AG04449 (cell line): ENCODE measurements at regions of chr10 and their contacts with region 1.

Region 1: DNA sequence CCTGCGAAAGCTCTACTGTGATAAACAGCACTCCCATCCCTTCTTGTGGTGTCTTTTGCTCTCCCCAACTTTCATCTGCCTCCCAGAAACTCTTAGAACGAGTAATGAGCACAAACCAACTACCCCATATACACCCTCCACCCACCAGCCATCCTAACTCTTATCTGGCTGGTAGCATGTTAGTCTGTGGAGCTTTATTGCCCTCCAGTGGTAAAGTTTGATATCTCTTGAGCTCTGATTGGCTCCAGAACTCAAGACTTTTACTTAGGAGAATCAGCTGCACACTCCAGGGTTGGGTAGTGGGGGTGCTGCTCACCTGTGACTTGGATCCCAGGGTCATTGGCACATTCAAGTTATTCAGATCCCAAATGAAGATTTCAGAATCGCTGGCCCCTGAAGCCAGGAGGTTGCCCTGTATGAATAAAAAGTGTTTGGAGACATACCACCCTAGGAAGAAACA is 10.9 kb downstream of the SEC31B start:
- DNase-seq: no peak
- H3K4me3 ChIP-seq: no peak overlapping the region
- CTCF ChIP-seq: peak; percentile 63

Region 2: GRCh38 chr10:100303724-100304319 is 204.9 kb before region 1 on chr10:
- CTCF ChIA-PET with region 1: interaction called, 12 read pairs
- POLR2A ChIA-PET with region 1: no interaction called
- DNase-seq: no peak
- H3K4me3 ChIP-seq: no peak overlapping the region
- CTCF ChIP-seq: peak; percentile 42

Region 3: GRCh38 chr10:100446130-100446761 is 62.5 kb before region 1 on chr10:
- CTCF ChIA-PET with region 1: interaction called, 124 read pairs
- POLR2A ChIA-PET with region 1: no interaction called
- DNase-seq: no peak
- H3K4me3 ChIP-seq: no peak overlapping the region
- CTCF ChIP-seq: no peak

Region 4: DNA sequence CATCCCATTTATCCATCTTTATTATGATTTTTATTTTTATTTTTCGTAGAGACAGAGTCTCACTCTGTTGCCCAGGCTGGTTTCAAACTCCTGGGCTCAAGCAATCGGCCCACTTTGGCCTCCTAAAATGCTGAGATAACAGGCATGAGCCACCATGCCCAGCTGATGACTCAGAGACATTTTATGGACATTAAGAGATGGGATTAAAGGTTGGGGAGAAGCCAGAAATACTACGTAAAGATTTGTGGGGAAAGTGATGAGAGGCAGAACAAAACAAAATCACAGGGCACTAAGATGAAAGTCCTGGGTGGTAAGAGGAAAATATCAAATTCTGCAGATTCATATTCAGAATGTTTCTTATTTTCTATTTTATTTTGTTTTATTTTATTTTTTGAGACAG is 38.4 kb before region 1 on chr10:
- CTCF ChIA-PET with region 1: interaction called, 11 read pairs
- POLR2A ChIA-PET with region 1: no interaction called
- DNase-seq: no peak
- H3K4me3 ChIP-seq: no peak overlapping the region
- CTCF ChIP-seq: no peak

Region 5: DNA sequence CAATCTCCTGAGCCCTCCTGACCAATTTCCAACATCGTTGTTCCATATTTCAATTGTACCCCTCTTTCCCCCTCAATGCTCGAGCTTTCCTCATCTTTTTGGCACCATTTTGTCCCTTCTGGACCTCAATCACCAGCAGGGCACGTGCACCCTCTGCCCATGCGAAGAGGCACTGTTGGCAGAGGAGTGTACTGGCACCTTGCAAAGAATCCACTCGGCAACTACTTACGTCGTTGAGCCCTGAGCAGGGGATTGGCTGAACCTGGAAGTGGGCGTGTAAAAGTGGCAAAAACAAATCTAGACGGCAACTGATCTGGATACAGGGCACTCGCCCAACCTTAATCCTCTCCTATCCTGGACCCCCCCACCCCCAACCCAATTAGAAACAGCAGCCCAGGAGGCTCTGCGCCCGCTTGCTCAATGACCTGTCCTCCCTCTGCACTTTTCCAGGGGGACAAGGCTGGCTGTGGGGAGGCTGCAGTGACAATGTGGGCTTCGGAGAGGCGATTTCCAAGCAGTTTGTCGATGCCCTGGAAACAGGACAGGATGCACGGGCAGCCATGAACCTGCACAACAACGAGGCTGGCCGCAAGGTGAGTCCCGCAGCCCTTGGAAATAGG is 27.1 kb before region 1 on chr10:
- CTCF ChIA-PET with region 1: interaction called, 422 read pairs
- POLR2A ChIA-PET with region 1: interaction called, 4 read pairs
- DNase-seq: no peak
- H3K4me3 ChIP-seq: peak overlapping the region; percentile 53
- CTCF ChIP-seq: no peak

Region 6: DNA sequence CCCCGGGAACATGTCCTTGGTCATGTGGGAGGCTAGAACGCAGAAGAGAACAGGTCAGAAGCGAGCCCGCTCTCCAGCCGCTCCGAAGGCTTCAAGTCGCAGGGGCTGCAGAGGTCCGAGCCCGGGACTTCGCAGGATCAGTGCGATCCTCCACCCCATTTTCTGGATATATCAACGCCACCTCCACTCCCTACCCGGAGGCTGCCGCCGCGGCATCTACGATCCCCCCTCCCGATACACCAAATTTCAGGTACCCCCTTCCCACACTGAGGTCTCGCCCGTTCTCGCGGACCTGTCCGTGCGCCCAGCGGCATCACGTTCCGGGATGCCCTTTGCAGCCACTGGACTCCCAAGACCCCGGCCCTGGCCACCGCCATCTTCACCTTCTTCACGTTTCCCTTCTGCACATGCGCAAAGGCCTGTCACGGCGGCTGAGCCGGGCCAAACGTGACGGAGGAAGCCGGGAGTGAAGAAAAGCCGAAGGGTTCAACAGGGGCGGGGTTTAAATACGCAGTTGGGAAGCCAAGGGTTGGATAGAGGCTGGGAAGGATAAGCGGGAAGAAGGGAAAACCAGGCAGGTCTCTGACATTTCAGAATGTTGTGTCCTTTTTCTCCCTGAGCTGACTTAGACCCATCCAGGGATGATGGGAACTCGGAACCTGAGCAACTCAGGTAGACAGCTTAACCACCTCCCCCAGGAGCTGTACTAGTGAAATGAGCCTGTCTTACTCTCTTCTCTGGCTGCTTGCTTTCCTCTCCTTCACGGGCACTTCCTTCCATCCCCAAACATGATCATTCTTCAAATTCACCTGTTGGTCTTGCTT is 21.0 kb after region 1 on chr10 and contains the start of gene NDUFB8:
- CTCF ChIA-PET with region 1: interaction called, 67 read pairs
- POLR2A ChIA-PET with region 1: no interaction called
- DNase-seq: no peak
- H3K4me3 ChIP-seq: peak within 1 kb of the TSS; percentile 98
- CTCF ChIP-seq: no peak

Region 7: DNA sequence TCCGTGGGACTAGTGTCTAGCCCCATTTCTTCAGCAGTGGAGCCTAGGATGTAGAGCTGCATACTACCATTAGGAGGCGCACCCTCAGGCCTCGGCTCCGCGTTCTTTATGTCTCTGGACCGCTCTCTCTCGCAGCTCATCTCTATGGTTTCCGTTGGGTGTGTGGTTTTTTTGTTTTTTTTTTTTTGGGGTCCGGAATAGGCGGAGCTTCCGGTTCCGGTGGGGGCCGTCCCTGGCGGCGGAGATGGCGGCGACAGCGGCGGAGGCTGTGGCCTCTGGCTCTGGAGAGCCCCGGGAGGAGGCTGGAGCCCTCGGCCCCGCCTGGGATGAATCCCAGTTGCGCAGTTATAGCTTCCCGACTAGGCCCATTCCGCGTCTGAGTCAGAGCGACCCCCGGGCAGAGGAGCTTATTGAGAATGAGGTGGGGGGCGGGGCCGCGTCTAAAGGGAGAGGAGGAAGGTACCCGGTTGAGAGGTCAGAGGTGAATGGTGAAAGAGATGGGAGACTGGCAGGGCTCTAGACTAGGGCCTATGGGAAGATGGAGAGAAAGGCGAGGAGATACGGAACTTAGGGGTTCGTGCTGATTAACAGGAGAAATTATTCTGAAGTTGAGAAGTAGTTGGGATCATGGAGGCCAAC is 27.1 kb after region 1 on chr10 and contains the start of gene HIF1AN:
- CTCF ChIA-PET with region 1: interaction called, 10 read pairs
- POLR2A ChIA-PET with region 1: interaction called, 3 read pairs
- DNase-seq: peak; percentile 63
- H3K4me3 ChIP-seq: peak within 1 kb of the TSS; percentile 67
- CTCF ChIP-seq: peak; percentile 95

Region 8: GRCh38 chr10:100864978-100865377 is 356.3 kb after region 1 on chr10:
- CTCF ChIA-PET with region 1: no interaction called
- POLR2A ChIA-PET with region 1: no interaction called
- DNase-seq: no peak
- H3K4me3 ChIP-seq: no peak overlapping the region
- CTCF ChIP-seq: no peak